ENCODE measurements at regions of chr5 and their contacts with region 1.

Region 1: GRCh38 chr5:124748687-124749594 is 2.5 kb upstream of the ZNF608 start:
- DNase-seq: peak; percentile 97
- H3K4me3 ChIP-seq: peak overlapping the region; percentile 65 to 89 (median 88)
- H3K27ac ChIP-seq: peak overlapping the region; percentile 98
- H3K4me1 ChIP-seq: peaks cover 20% of the 10 kb centered on the region
- H3K27me3 ChIP-seq: no peaks in the 10 kb centered on the region
- CTCF ChIP-seq: no peak
- POLR2A ChIP-seq: no peak

Region 2: DNA sequence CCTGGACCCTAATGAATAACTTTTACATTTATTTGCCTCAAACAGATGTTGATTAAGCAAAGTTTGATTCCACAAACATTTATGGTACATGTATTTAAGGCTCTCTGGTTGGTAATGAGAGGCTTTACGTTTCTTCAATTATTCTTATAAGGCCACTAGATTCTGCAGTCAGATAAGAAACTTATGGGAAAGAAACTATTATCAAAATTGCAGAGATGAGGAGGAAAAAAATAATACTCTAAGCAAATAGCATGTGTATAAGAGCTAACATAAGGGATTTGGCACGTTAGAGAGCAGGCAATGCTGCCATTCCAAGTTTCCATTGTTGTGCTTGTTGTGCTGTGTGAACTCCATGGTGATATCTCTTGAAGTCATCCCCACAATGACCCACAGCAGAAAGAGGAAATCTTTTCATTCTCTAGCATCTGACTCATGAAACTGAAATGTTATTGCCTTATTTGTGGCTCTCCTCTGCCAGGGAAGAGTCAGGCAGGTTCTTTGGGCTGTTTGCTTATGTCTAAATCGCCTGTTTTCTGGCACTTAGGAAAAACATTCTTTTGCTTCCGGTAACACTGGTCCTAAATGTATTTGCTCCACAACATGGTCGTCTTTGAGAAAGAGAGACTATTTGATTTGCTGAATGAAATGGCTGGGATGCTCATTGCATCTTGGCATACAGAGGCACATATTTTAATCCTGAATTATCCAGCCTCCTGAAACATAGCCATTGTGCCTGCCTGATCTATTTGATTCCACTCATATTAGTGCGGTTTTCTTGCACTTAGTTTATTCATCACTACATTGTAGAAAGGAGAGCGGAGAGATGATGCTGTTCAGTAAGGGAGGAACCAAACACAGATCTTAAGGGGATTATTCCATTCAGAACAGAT is 1048.3 kb before region 1 on chr5:
- CTCF ChIA-PET with region 1: no interaction called
- POLR2A ChIA-PET with region 1: no interaction called
- dilution Hi-C with region 1: no loop called
- intact Hi-C with region 1: loop called (anchors 1 kb)
- DNase-seq: peak; percentile 99
- H3K4me3 ChIP-seq: no peak overlapping the region
- H3K27ac ChIP-seq: peak overlapping the region; percentile 93
- H3K4me1 ChIP-seq: peaks cover 21% of the 10 kb centered on the region
- H3K27me3 ChIP-seq: no peaks in the 10 kb centered on the region
- CTCF ChIP-seq: no peak
- POLR2A ChIP-seq: peak; percentile 27

Region 3: GRCh38 chr5:123943151-123943550 is 805.8 kb before region 1 on chr5:
- CTCF ChIA-PET with region 1: no interaction called
- POLR2A ChIA-PET with region 1: no interaction called
- dilution Hi-C with region 1: no loop called
- intact Hi-C with region 1: no loop called
- DNase-seq: no peak
- H3K4me3 ChIP-seq: no peak overlapping the region
- H3K27ac ChIP-seq: no peak overlapping the region
- H3K4me1 ChIP-seq: no peaks in the 10 kb centered on the region
- H3K27me3 ChIP-seq: no peaks in the 10 kb centered on the region
- CTCF ChIP-seq: no peak
- POLR2A ChIP-seq: no peak

Region 4: DNA sequence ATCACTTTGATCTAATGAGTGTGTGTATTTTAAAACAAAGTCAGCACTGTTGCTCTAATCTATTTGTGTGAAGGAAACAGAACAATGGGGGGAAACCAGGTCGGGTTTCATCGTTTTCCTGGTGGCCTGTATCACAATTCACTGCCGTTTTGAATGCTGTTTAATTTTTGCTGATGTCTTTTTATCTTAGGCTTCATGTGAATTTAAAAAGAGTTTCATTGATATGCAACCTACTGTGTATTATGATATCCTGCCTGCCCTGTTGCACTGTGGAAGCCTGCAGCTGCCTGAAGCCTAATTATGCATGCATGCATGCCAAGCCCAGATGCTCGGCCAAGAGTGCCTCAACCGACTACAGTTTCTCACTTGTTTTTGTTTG is 310.0 kb before region 1 on chr5:
- CTCF ChIA-PET with region 1: no interaction called
- POLR2A ChIA-PET with region 1: no interaction called
- dilution Hi-C with region 1: no loop called
- intact Hi-C with region 1: loop called (anchors 2 kb)
- DNase-seq: peak; percentile 80
- H3K4me3 ChIP-seq: peak overlapping the region in 1 of 3 experiments; percentile 2
- H3K27ac ChIP-seq: no peak overlapping the region
- H3K4me1 ChIP-seq: peaks cover 7% of the 10 kb centered on the region
- H3K27me3 ChIP-seq: no peaks in the 10 kb centered on the region
- CTCF ChIP-seq: no peak
- POLR2A ChIP-seq: no peak

Region 5: GRCh38 chr5:124806373-124807077 is 57.6 kb after region 1 on chr5:
- CTCF ChIA-PET with region 1: no interaction called
- POLR2A ChIA-PET with region 1: no interaction called
- dilution Hi-C with region 1: no loop called
- intact Hi-C with region 1: loop called (anchors 1 kb)
- DNase-seq: peak; percentile 94
- H3K4me3 ChIP-seq: no peak overlapping the region
- H3K27ac ChIP-seq: no peak overlapping the region
- H3K4me1 ChIP-seq: peaks cover 5% of the 10 kb centered on the region
- H3K27me3 ChIP-seq: no peaks in the 10 kb centered on the region
- CTCF ChIP-seq: no peak
- POLR2A ChIP-seq: no peak

Region 6: DNA sequence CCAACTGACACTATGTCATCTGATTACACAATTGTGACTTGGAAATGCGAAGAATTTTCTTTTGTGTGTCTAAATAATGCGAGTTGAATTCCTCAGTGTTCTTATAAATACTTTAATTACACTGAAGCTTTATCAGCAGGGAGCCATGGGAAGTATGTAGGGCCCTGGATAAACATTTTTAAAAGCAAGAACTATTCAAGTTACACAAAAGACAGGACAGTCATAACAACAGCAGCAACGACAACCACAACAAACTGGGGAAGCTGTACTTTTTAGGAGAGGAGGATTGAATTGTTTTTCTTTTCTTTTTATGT is 247.8 kb after region 1 on chr5:
- CTCF ChIA-PET with region 1: interaction called, 3 read pairs
- POLR2A ChIA-PET with region 1: interaction called, 3 read pairs
- dilution Hi-C with region 1: no loop called
- intact Hi-C with region 1: loop called (anchors 2 kb)
- DNase-seq: peak; percentile 68
- H3K4me3 ChIP-seq: no peak overlapping the region
- H3K27ac ChIP-seq: no peak overlapping the region
- H3K4me1 ChIP-seq: peaks cover 8% of the 10 kb centered on the region
- H3K27me3 ChIP-seq: no peaks in the 10 kb centered on the region
- CTCF ChIP-seq: no peak
- POLR2A ChIP-seq: no peak

Region 7: GRCh38 chr5:125277494-125278154 is 528.7 kb after region 1 on chr5:
- CTCF ChIA-PET with region 1: no interaction called
- POLR2A ChIA-PET with region 1: no interaction called
- dilution Hi-C with region 1: no loop called
- intact Hi-C with region 1: loop called (anchors 1 kb)
- DNase-seq: peak; percentile 93
- H3K4me3 ChIP-seq: no peak overlapping the region
- H3K27ac ChIP-seq: peak overlapping the region; percentile 85
- H3K4me1 ChIP-seq: peaks cover 46% of the 10 kb centered on the region
- H3K27me3 ChIP-seq: no peaks in the 10 kb centered on the region
- CTCF ChIP-seq: no peak
- POLR2A ChIP-seq: no peak

Region 8: GRCh38 chr5:125559296-125559695 is 810.4 kb after region 1 on chr5:
- CTCF ChIA-PET with region 1: interaction called, 5 read pairs
- POLR2A ChIA-PET with region 1: no interaction called
- dilution Hi-C with region 1: no loop called
- intact Hi-C with region 1: loop called (anchors 2 kb)
- DNase-seq: peak; percentile 99
- H3K4me3 ChIP-seq: peak overlapping the region in 1 of 3 experiments; percentile 13
- H3K27ac ChIP-seq: peak overlapping the region; percentile 51
- H3K4me1 ChIP-seq: peaks cover 17% of the 10 kb centered on the region
- H3K27me3 ChIP-seq: no peaks in the 10 kb centered on the region
- CTCF ChIP-seq: no peak
- POLR2A ChIP-seq: peak; percentile 74

Measured in endothelial cell of umbilical vein (primary cell).